ENCODE measurements at regions of chr19 and their contacts with region 1.

Region 1: DNA sequence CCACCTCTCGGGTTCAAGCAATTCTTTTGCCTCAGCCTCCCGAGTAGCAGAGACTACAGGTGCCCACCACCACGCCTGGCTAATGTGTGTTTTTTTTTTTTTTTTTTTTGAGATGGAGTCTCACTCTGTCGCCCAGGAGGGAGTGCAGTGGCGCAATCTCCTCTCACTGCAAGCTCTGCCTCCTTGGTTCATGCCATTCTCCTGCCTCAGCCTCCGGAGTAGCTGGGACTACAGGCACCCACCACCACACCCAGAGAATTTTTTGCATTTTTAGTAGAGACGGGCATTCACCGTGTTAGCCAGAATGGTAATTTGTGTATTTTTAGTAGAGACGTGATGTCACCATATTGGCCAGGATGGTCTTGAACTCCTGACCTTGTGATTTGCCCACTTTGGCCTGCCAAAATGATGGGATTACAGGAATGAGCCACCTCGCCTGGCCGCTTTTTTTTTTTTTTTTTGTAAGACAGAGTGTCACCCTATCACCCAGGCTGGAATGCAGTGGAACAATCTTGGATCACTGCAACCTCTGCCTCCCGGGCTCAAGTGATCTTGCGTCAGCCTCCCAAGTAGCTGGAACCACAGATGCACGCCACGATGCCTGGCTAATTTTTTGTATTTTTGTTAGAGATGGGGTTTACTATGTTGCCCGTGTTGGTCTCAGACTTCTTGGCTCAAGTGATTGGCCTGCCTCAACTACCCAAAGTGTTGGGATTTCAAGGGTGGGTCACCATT is 29.1 kb upstream of the ZNF808 start:
- DNase-seq: no peak
- ATAC-seq: no peak
- H3K4me3 ChIP-seq: no peak overlapping the region
- H3K27ac ChIP-seq: no peak overlapping the region
- H3K4me1 ChIP-seq: no peaks in the 10 kb centered on the region
- H3K27me3 ChIP-seq: no peaks in the 10 kb centered on the region
- CTCF ChIP-seq: no peak

Region 2: DNA sequence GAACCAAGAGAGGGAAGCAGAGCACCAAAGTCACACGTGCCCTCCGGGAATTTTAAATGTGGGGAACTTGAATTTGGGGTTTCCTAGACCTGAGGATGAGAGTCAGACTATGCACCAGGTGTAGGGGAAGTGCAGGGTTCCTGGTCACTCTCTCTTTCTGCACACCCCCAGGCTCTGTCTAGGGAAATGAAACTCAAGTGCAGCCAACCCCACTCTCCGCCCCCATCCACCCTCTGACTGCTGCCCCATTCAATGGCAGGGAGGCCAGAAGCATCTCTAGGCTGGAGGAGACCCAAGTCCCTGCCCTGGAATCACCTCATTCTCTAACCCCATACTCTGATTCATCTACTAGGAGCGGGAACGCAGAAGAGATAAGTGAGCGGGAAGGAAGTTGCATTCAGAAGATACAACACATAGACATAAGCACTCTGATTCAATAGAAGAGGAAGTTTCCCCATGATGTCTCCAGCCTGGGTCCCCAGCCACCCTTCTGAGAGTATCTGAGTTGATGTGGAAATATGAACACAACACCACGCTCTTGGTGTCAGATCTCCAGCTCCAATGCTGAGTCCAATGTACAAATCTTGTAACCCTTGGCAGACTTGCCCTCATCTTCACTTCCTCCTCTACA is 847.1 kb before region 1 on chr19:
- CTCF ChIA-PET with region 1: no interaction called
- POLR2A ChIA-PET with region 1: no interaction called
- intact Hi-C with region 1: no loop called
- DNase-seq: no peak
- ATAC-seq: no peak
- H3K4me3 ChIP-seq: no peak overlapping the region
- H3K27ac ChIP-seq: no peak overlapping the region
- H3K4me1 ChIP-seq: no peaks in the 10 kb centered on the region
- H3K27me3 ChIP-seq: peaks cover 69% of the 10 kb centered on the region
- CTCF ChIP-seq: no peak

Region 3: DNA sequence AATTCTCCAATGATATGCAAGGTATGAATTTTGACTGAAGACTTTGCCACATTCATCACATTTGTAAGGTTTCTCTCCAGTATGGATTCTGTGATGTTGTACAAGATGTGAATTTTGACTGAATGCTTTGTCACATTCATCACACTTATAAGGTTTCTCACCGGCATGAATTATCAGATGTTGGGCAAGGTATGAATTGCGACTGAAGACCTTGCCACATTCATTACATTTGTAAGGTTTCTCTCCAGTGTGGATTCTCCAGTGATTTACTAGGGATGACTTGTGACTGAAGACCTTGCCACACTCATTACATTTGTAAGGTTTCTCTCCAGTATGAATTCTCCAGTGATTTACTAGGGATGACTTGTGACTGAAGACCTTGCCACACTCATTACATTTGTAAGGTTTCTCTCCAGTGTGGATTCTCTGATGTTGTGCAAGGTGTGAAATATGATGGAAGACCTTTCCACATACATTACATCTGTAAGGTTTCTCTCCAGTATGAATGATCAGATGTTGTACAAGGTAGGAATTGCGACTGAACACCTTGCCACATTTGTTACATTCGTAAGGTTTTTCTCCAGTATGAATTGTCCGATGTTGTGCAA is 115.0 kb after region 1 on chr19:
- CTCF ChIA-PET with region 1: no interaction called
- POLR2A ChIA-PET with region 1: interaction called, 17 read pairs
- intact Hi-C with region 1: no loop called
- DNase-seq: no peak
- ATAC-seq: no peak
- H3K4me3 ChIP-seq: no peak overlapping the region
- H3K27ac ChIP-seq: no peak overlapping the region
- H3K4me1 ChIP-seq: no peaks in the 10 kb centered on the region
- H3K27me3 ChIP-seq: no peaks in the 10 kb centered on the region
- CTCF ChIP-seq: no peak